Lower leg skin (tissue), 4 donors: ENCODE measurements at regions of chr15 and their contacts with region 1.

Region 1: GRCh38 chr15:74664028-74664616 is 31.7 kb downstream of the EDC3 start:
- DNase-seq: no peak
- H3K4me3 ChIP-seq: no peak overlapping the region
- CTCF ChIP-seq: no peak
- POLR2A ChIP-seq: no peak

Region 2: DNA sequence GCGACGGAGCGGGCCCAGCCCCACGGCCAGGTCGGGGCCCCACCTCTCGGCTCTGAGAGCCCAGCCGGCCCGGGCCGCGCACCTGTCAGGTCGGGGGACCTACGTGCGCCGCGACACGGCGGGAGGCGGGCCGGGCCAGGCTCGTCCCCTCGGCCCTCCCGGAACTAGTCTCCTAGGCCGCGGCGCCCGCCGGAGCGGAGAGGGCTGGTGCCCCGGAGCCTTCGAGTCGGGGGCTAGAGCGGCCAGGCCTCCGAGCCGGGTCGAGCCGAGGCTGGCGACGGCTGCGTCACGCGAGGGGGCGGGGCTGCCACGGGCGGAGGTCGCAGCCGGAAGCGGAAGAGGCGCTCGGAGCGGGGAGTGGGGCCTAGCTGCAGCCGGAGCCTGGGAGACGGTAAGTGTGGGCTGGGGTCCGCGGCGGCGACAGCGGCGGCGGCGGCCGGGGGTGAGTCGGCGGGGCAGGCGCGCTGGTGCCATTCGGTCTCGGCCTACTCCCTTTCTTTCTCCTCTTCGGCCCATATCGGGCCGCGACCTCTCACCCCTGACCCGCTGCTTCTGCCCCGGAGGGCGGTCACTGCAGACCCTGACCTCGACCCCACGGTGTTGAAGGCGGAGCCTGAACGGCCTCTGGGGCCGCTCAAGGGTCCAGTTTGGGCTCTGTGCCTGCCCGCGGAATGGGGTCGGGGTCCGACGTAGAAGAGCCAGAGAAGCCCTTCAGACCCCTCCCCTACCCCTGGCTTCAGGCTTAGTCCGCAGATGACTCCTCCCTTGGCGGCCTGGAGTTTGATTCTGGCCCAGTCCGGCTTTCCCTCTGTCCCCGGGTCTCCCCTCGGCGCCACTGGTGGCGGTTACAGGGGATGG is 48.4 kb before region 1 on chr15 and contains the start of gene CLK3:
- intact Hi-C with region 1: loop called (anchors 2 kb)
- DNase-seq: peak; percentile 91 to 99
- H3K4me3 ChIP-seq: peak within 1 kb of the TSS; percentile 96
- CTCF ChIP-seq: no peak
- POLR2A ChIP-seq: peak in 1 of 2 donors; percentile 36
- total RNA-seq, gene CLK3: 96.7 to 230 (median 117) TPM

Region 3: DNA sequence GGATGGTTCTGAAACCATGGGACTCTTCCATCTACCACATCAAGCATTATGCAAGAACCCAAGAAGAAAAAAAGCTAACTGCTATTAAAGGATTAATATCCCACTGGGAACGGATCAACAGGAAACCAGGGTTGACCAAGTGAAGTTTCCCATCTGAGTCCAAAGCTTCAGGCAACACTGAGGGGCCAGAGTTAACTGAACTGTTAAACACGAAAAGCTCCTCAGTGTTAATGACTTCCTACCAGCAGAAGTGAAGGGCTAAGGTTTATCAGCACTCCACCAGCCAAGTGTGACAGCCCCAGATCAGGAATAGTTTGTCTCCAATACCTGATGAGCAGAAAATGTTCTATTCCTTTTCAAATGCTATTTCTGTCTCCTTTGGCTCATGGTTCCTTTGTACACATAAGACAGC is 878.3 kb after region 1 on chr15:
- intact Hi-C with region 1: no loop called
- DNase-seq: no peak
- H3K4me3 ChIP-seq: no peak overlapping the region
- CTCF ChIP-seq: no peak
- POLR2A ChIP-seq: no peak

Region 4: DNA sequence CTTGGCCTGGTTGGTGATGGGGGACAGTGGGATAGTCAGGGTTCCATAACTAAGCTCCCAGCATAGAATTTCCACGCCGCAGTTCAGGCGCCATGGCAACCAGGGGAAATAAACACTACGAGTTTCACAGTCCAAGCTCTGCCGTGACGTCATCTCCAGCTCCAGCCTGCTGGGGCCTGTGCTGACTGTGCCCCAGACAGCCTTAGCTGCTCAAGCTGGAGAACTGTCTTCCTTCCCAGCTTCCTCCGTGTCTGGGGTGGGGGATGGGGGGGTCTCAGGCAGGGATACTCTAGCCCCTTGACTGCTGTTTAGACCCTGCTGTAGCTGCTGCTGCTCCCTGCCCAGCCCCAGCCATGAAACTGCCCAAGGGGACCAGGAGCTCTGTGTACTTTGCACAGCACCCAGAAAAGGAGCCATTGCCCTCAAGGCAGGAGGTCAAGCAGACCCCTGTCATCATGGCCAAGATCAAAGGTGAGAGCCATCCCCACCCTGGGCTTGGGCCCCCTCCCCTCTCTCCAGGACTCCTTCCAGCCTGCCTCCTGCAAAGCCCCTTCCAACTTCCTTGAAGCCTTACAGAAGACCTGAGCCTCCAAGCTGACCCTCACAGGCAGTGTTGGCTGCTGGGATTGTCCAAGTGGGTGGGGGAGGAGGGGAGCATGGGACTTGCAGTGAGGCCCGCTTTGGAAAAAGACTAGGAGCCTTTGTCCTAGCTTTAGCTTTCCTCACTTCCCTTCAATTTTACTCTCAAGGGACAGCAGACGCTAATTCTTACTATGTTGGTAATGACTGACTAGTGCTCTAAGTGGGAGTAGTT is 1059.9 kb after region 1 on chr15:
- intact Hi-C with region 1: no loop called
- DNase-seq: peak; percentile 91 to 97
- H3K4me3 ChIP-seq: no peak overlapping the region
- CTCF ChIP-seq: no peak
- POLR2A ChIP-seq: no peak